ENCODE measurements at regions of chr6 and their contacts with region 1.

Region 1: DNA sequence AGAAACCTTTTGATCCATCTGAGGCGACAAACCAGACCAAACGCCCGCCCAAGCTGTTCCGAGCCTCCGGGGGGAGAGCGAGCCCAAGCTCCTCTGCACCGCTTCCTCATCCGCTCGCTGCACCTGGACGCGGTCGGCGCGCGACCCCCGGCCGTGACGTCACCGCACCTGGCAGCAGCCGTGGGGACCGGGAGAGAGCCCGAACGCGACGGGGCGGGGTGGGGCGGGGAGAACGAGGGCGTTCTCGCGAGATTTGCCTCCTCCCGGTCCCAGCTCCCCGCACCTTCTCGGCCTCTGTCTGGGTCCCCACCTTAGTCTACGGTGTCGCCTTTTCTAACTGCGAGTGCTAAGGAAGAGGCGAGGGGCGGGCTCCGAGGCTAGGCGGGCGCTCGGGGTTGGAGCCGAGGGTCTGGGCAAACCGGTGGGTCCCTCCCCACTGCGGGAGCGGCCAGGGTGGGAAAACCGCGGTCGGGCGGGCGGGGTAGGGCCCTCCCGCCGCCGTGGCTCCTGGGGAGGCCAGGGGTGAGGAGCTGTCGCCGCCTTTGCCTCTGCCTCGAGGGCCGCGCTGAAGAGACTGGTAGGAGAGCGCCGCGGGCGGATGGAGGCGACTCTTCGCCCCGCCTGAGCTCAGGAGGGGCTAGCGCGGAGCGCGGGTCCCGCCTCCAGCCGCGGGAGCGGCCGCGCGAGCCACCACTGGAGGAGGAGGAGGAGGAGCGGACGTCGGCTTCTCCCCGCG is at the start of gene CD2AP:
- DNase-seq: peak; percentile 74
- ATAC-seq: peak; percentile 94
- H3K4me3 ChIP-seq: peak within 1 kb of the TSS; percentile 92
- H3K27ac ChIP-seq: peak within 1 kb of the TSS; percentile 84
- H3K4me1 ChIP-seq: no peaks in the 10 kb centered on the region; the same call in 1 of the 2 replicates
- H3K27me3 ChIP-seq: no peaks in the 10 kb centered on the region
- CTCF ChIP-seq: peak; percentile 11; the same call in 1 of the 2 replicates
- POLR2A ChIP-seq: peak; percentile 77
- RAD21 ChIP-seq: no peak
- total RNA-seq, gene CD2AP: 7.5 and 18.3 TPM in 2 replicates

Region 2: GRCh38 chr6:47097092-47097945 is 380.3 kb before region 1 on chr6:
- CTCF ChIA-PET with region 1: no interaction called
- POLR2A ChIA-PET with region 1: no interaction called
- dilution Hi-C with region 1: no loop called
- in situ Hi-C with region 1: no loop called
- intact Hi-C with region 1: loop called (anchors 5 kb)
- DNase-seq: peak; percentile 85
- ATAC-seq: peak; percentile 90
- H3K4me3 ChIP-seq: no peak overlapping the region
- H3K27ac ChIP-seq: no peak overlapping the region
- H3K4me1 ChIP-seq: no peaks in the 10 kb centered on the region
- H3K27me3 ChIP-seq: 0 out of 2 replicates have a peak, but pooled peaks cover 2% of the 10 kb centered on the region
- CTCF ChIP-seq: peak; percentile 95
- POLR2A ChIP-seq: 0 out of 2 replicates have a peak, but pooled peaks have one; percentile 23
- RAD21 ChIP-seq: peak; percentile 98

Region 3: GRCh38 chr6:47413752-47414422 is 63.8 kb before region 1 on chr6:
- CTCF ChIA-PET with region 1: no interaction called
- POLR2A ChIA-PET with region 1: no interaction called
- dilution Hi-C with region 1: no loop called
- in situ Hi-C with region 1: no loop called
- intact Hi-C with region 1: loop called (anchors 2 kb)
- DNase-seq: peak; percentile 69
- ATAC-seq: peak; percentile 95
- H3K4me3 ChIP-seq: peak overlapping the region; percentile 25
- H3K27ac ChIP-seq: no peak overlapping the region
- H3K4me1 ChIP-seq: peaks cover 2% of the 10 kb centered on the region; the same call in 1 of the 2 replicates
- H3K27me3 ChIP-seq: no peaks in the 10 kb centered on the region
- CTCF ChIP-seq: peak; percentile 91
- POLR2A ChIP-seq: no peak
- RAD21 ChIP-seq: peak; percentile 82

Region 4: GRCh38 chr6:47489995-47490394 is 12.3 kb after region 1 on chr6:
- CTCF ChIA-PET with region 1: no interaction called
- POLR2A ChIA-PET with region 1: interaction called, 16 read pairs
- dilution Hi-C with region 1: no loop called
- in situ Hi-C with region 1: no loop called
- intact Hi-C with region 1: no loop called
- DNase-seq: no peak
- ATAC-seq: no peak
- H3K4me3 ChIP-seq: no peak overlapping the region
- H3K27ac ChIP-seq: no peak overlapping the region
- H3K4me1 ChIP-seq: peaks cover 2% of the 10 kb centered on the region
- H3K27me3 ChIP-seq: no peaks in the 10 kb centered on the region
- CTCF ChIP-seq: no peak
- POLR2A ChIP-seq: no peak
- RAD21 ChIP-seq: no peak

Region 5: GRCh38 chr6:47587493-47587892 is 109.8 kb after region 1 on chr6:
- CTCF ChIA-PET with region 1: no interaction called
- POLR2A ChIA-PET with region 1: no interaction called
- dilution Hi-C with region 1: no loop called
- in situ Hi-C with region 1: no loop called
- intact Hi-C with region 1: loop called (anchors 5 kb)
- DNase-seq: peak; percentile 45
- ATAC-seq: peak; percentile 63
- H3K4me3 ChIP-seq: no peak overlapping the region
- H3K27ac ChIP-seq: no peak overlapping the region
- H3K4me1 ChIP-seq: peaks cover 4% of the 10 kb centered on the region; the same call in 1 of the 2 replicates
- H3K27me3 ChIP-seq: no peaks in the 10 kb centered on the region
- CTCF ChIP-seq: no peak
- POLR2A ChIP-seq: no peak
- RAD21 ChIP-seq: no peak

Region 6: GRCh38 chr6:47603995-47604394 is 126.3 kb after region 1 on chr6:
- CTCF ChIA-PET with region 1: no interaction called
- POLR2A ChIA-PET with region 1: interaction called, 13 read pairs
- dilution Hi-C with region 1: no loop called
- in situ Hi-C with region 1: no loop called
- intact Hi-C with region 1: no loop called
- DNase-seq: no peak
- ATAC-seq: no peak
- H3K4me3 ChIP-seq: no peak overlapping the region
- H3K27ac ChIP-seq: no peak overlapping the region
- H3K4me1 ChIP-seq: no peaks in the 10 kb centered on the region
- H3K27me3 ChIP-seq: no peaks in the 10 kb centered on the region
- CTCF ChIP-seq: no peak
- POLR2A ChIP-seq: no peak
- RAD21 ChIP-seq: no peak

Region 7: DNA sequence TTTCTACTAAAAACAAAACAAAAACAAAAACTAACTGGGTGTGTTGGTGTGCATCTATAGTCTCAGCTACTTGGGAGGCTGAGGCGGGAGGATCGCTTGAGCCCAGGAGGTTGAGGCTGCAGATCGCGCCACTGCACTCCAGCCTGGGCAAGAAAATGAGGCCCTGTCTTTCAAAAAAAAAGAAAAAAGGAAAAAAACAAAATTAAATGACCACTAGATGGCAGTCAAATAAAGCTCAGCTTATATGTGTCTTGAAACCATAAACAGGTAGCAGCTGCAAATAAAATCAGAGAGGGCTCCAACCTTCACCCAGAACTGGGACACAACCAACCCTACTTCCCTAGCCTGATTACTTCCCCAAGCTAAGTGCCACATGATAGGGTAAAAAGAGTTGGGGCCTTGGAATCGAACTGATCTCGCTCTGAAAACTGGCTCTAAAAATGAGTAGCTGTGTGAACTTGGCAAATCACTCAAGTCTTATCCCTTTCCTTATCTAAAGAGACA is 153.7 kb after region 1 on chr6:
- CTCF ChIA-PET with region 1: no interaction called
- POLR2A ChIA-PET with region 1: no interaction called
- dilution Hi-C with region 1: no loop called
- in situ Hi-C with region 1: no loop called
- intact Hi-C with region 1: loop called (anchors 5 kb)
- DNase-seq: peak; percentile 45
- ATAC-seq: peak; percentile 47
- H3K4me3 ChIP-seq: no peak overlapping the region
- H3K27ac ChIP-seq: no peak overlapping the region
- H3K4me1 ChIP-seq: no peaks in the 10 kb centered on the region
- H3K27me3 ChIP-seq: no peaks in the 10 kb centered on the region
- CTCF ChIP-seq: peak; percentile 66
- POLR2A ChIP-seq: no peak
- RAD21 ChIP-seq: peak; percentile 66

Region 8: DNA sequence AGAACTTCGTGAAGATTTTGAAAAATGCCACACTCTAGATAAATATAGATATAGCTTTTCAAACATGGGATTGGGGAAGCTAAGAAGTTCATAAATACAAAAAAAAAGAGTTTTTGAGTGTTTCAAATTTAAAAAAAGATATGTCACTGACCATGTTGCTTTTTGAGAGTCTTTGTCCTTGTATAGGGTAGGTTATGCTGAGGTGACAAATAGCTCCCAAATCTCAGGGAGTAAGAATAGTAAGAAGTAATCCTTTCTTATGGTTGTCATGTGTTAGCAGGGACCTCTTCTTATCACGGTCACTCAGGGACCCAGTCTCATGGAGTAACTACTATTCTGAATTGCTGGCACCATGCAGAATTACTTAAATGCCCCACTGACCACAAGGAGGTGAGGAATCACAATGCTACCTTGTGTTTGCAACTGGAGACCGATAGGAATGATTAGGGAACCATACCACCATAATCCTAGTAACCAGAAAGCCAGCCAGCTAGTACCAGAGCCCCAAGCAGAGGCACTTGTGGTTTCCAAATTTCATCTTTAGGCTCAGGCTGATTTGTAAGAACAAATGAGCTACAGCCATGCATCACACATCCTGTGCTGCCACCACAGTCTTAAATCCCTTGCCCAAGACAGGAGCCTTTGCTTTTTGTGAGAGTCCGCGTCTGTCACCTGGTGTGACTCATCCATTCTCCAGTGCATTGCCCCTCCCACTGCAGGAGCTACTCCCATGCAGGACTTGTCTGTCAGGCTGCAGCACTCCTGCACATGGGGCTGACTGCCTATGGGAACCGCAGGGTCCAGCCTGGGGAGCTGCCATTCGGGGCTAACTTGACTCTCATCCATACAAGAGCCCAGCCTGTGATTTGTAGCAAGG is 178.3 kb after region 1 on chr6:
- CTCF ChIA-PET with region 1: no interaction called
- POLR2A ChIA-PET with region 1: no interaction called
- dilution Hi-C with region 1: no loop called
- in situ Hi-C with region 1: no loop called
- intact Hi-C with region 1: no loop called
- DNase-seq: no peak
- ATAC-seq: no peak
- H3K4me3 ChIP-seq: no peak overlapping the region
- H3K27ac ChIP-seq: no peak overlapping the region
- H3K4me1 ChIP-seq: no peaks in the 10 kb centered on the region
- H3K27me3 ChIP-seq: no peaks in the 10 kb centered on the region; the same call in 1 of the 2 replicates
- CTCF ChIP-seq: no peak
- POLR2A ChIP-seq: no peak
- RAD21 ChIP-seq: no peak

Region 9: DNA sequence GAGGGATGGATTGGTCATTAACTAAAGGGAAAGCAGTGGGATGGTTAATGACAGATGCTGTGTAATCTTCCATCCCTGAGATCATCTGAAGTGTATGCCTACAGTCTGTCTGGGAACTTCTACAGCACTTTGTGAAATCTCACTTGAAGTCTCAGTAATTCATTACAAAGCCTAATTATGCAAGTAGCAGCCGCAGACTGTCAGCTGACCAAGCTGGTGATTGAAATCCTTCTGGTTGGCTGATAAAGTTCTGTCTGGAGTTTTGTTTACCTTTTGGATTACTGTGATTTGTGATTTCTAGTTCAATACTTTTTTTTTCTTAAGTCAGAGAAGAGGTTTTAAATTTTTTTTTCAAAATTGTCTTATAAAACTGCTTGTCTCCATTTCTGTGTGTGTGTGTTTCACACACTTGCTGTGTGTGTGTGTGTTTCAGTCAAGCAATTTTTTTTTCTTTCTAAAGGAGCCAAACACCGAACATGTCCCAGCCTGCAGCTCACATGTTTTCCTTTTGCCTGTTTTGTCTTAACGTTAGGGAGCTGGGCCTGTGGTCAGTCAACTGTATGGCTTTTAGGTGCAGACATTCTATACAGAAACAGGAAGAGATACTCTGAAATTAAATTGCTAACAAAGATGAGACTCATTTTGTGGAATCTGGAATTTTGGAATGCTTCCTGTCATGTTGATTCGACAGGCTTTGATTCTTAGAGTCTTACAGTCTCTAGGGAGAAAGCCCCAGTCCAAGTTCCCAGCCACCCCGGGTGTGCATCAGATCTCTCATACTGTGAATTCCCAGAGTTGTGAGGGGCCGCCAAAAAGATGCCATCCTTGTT is 192.2 kb after region 1 on chr6:
- CTCF ChIA-PET with region 1: no interaction called
- POLR2A ChIA-PET with region 1: no interaction called
- dilution Hi-C with region 1: no loop called
- in situ Hi-C with region 1: no loop called
- intact Hi-C with region 1: no loop called
- DNase-seq: no peak
- ATAC-seq: no peak
- H3K4me3 ChIP-seq: no peak overlapping the region
- H3K27ac ChIP-seq: no peak overlapping the region
- H3K4me1 ChIP-seq: no peaks in the 10 kb centered on the region
- H3K27me3 ChIP-seq: no peaks in the 10 kb centered on the region
- CTCF ChIP-seq: no peak
- POLR2A ChIP-seq: no peak
- RAD21 ChIP-seq: no peak

Measured in IMR-90 (cell line).